ENCODE measurements at regions of chr7 and their contacts with region 1.

Region 1: GRCh38 chr7:152463709-152464311 is 28.0 kb upstream of the KMT2C start:
- ATAC-seq: peak; percentile 73 to 92 (median 86)
- H3K4me3 ChIP-seq: peak overlapping the region; percentile 85 to 97 (median 94)
- H3K27ac ChIP-seq: peak overlapping the region; percentile 99
- H3K4me1 ChIP-seq: peaks cover 4 to 7% of the 10 kb centered on the region in 2 donors

Region 2: DNA sequence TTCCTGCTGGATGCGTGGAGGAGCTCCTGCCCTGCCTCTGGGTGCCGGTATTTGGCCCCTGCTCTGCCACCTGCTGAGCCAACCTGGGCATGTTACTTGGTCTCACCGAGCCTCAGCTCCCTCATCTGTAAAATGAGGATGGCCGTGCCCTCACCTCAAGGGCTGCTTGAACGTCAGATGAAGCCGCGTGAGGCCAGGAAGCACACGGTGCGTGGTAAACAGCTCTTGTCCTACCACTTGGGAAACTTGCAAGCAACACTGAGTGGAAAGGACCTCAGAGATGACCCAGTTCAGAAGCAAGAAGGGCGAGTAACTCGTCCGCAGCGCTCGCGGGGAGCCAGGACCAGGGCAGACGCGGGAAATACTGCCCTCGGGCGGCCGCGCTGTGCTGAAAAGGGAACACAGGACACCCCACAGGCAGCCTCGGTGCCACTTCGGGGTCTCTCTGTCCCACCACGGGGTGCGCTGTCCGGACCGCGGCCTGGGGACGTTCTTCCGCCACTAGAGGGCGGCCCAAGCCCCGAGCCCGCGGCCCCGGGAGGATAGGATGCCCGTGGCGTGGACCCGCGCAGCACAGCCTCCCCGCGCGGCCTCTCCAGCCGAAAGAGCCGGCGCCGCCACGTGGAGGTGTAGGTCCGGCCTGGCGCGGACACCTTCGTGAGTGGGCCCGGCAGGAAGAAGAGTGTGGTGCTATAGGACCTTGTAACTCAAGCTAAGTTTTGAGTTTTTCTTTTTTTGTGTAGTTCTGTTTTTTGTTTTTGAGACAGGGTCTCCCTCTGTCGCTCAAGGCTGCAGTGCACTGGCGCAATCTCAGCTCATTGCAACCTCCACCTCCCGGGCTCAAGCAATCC is 681.0 kb before region 1 on chr7:
- in situ Hi-C with region 1: no loop called
- ATAC-seq: peak; percentile 95 to 98 (median 97)
- H3K4me3 ChIP-seq: peak overlapping the region in 3 of 5 donors; percentile 1 to 5 (median 1)
- H3K27ac ChIP-seq: no peak overlapping the region
- H3K4me1 ChIP-seq: peaks cover 8 to 15% of the 10 kb centered on the region in 2 donors

Region 3: GRCh38 chr7:152675759-152676636 is 212.2 kb after region 1 on chr7 and contains the start of gene XRCC2:
- in situ Hi-C with region 1: loop called in 1 of 9 experiments (anchors 25 kb)
- ATAC-seq: peak; percentile 97 to 99 (median 99)
- H3K4me3 ChIP-seq: peak within 1 kb of the TSS; percentile 47 to 65 (median 54)
- H3K27ac ChIP-seq: peak within 1 kb of the TSS; percentile 65 to 70
- H3K4me1 ChIP-seq: peaks cover 0 to 10% of the 10 kb centered on the region in 2 donors
- total RNA-seq, gene XRCC2: 0.20 to 11.4 (median 1.2) TPM

Measured in motor neuron (in vitro differentiated cells).